CD8-positive, alpha-beta T cell (primary cell): ENCODE measurements at regions of chr12 and their contacts with region 1.

Region 1: DNA sequence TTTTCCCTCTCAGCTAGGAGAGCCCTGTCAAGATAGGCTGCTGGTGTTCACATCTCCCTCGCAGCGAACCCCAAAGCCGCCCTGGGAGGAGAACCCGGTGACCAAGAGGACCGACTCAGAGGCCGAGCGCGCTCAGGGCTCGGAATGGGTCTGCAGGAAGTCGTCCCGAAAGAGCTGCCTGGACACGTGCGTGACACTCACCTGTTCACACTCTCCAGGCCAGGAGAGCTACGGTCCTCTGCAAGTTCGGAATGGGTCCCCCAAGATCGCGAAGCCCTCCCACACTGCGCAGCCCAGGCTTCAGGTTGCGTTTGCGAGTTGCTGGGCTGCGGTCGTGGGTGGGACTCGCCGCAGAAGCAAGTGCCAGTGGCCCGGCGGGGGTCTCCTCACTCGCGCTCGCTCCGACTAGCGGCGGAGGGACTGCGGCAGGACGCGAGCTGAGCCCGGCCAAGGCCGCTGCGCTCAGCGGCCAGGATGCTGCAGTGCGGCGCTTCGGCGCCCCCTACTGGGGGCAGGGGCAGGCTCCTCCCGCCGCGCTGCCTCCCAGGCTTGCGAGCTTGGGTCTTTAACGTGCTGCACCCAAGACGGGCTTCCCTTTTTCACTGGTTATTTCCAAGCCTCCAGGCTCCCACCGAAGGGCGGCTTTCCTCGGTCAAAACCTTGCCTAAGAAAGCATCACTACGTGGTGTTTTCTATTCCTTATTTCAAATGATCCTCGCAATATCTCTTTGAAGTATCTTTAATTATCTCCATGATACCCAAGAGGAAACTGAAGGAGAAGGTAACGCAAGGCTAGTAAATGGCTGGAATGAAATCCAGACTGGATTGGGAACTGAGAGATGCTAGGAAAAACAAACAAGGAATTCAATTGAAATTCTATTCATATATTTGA is at the start of gene RERG:
- DNase-seq: peak; percentile 35 to 87 (median 67)
- ATAC-seq: peak; percentile 96
- H3K4me3 ChIP-seq: peak within 1 kb of the TSS; percentile 42 to 46
- H3K4me3 Mint-ChIP-seq: peak within 1 kb of the TSS; percentile 76
- H3K27ac ChIP-seq: no peak within 1 kb of the TSS
- H3K27ac Mint-ChIP-seq: no peak within 1 kb of the TSS
- H3K4me1 ChIP-seq: peaks cover 7% of the 10 kb centered on the region
- H3K4me1 Mint-ChIP-seq: peaks cover 15% of the 10 kb centered on the region
- H3K27me3 ChIP-seq: peaks cover 0 to 3% of the 10 kb centered on the region in 2 experiments
- H3K27me3 Mint-ChIP-seq: peaks cover 22% of the 10 kb centered on the region
- CTCF ChIP-seq: peak; percentile 84
- total RNA-seq, gene RERG: not detected

Region 2: GRCh38 chr12:14629832-14630710 is 591.2 kb before region 1 on chr12:
- CTCF ChIA-PET with region 1: interaction called, 3 read pairs
- POLR2A ChIA-PET with region 1: no interaction called
- intact Hi-C with region 1: loop called in 1 of 2 experiments (anchors 5 kb)
- DNase-seq: peak; percentile 32 to 77 (median 66)
- ATAC-seq: peak; percentile 100
- H3K4me3 ChIP-seq: no peak overlapping the region
- H3K4me3 Mint-ChIP-seq: no peak overlapping the region
- H3K27ac ChIP-seq: no peak overlapping the region
- H3K27ac Mint-ChIP-seq: no peak overlapping the region
- H3K4me1 ChIP-seq: no peaks in the 10 kb centered on the region
- H3K4me1 Mint-ChIP-seq: peaks cover 2% of the 10 kb centered on the region
- H3K27me3 ChIP-seq: no peaks in the 10 kb centered on the region
- H3K27me3 Mint-ChIP-seq: peaks cover 2% of the 10 kb centered on the region
- CTCF ChIP-seq: peak; percentile 99

Region 3: DNA sequence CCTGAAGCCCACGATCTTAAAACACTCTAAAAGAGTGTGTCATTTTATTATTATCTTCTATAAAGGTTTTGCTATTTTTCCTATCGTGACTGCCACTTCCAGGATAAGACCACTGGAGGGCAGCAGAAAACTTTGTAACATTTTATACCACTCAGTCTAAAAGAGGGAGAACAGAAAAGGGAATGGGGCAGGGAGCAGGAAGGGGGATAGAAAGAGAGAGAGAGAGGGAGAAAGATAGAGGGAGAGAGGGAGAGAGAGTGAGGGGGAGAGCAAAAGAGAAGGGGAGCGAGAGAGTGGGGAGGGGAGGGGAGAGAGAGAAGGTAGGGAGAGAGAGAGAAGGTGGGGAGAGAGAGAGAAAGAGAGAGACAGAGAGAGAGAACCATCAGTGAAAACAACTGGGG is 375.9 kb before region 1 on chr12:
- CTCF ChIA-PET with region 1: interaction called, 22 read pairs
- POLR2A ChIA-PET with region 1: no interaction called
- intact Hi-C with region 1: loop called (anchors 1 to 2 kb)
- DNase-seq: peak; percentile 7 to 73 (median 39)
- ATAC-seq: peak; percentile 71
- H3K4me3 ChIP-seq: no peak overlapping the region
- H3K4me3 Mint-ChIP-seq: no peak overlapping the region
- H3K27ac ChIP-seq: no peak overlapping the region
- H3K27ac Mint-ChIP-seq: no peak overlapping the region
- H3K4me1 ChIP-seq: peaks cover 9% of the 10 kb centered on the region
- H3K4me1 Mint-ChIP-seq: peaks cover 8% of the 10 kb centered on the region
- H3K27me3 ChIP-seq: no peaks in the 10 kb centered on the region
- H3K27me3 Mint-ChIP-seq: no peaks in the 10 kb centered on the region
- CTCF ChIP-seq: peak; percentile 88

Region 4: GRCh38 chr12:14995583-14996425 is 225.4 kb before region 1 on chr12:
- CTCF ChIA-PET with region 1: interaction called, 4 read pairs
- POLR2A ChIA-PET with region 1: no interaction called
- intact Hi-C with region 1: loop called in 1 of 2 experiments (anchors 2 kb)
- DNase-seq: peak in 2 of 9 experiments; percentile 78 to 85
- ATAC-seq: peak; percentile 70
- H3K4me3 ChIP-seq: no peak overlapping the region
- H3K4me3 Mint-ChIP-seq: peak overlapping the region; percentile 20
- H3K27ac ChIP-seq: no peak overlapping the region
- H3K27ac Mint-ChIP-seq: peak overlapping the region; percentile 63
- H3K4me1 ChIP-seq: peaks cover 29% of the 10 kb centered on the region
- H3K4me1 Mint-ChIP-seq: peaks cover 31% of the 10 kb centered on the region
- H3K27me3 ChIP-seq: no peaks in the 10 kb centered on the region
- H3K27me3 Mint-ChIP-seq: peaks cover 2% of the 10 kb centered on the region
- CTCF ChIP-seq: peak; percentile 75

Region 5: DNA sequence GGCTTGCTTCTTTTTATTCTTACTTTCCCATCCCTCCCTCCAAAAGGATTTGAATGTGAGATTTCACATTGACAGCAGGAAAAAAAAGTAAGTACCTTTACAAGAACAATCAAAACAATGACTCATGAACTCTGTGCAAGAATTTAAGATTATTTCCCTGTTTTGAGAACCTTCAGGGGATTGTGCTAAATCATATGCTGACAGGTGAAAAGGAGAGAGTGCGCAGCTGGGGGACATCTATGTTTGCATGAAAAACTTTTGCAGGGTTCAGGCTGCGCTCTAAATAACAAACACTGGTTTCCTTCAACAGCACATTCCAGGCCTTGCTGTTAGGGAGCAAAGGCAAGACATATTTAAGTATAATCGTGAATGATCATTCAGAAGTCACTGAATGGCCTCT is 27.3 kb before region 1 on chr12:
- CTCF ChIA-PET with region 1: interaction called, 11 read pairs
- POLR2A ChIA-PET with region 1: interaction called, 3 read pairs
- intact Hi-C with region 1: no loop called
- DNase-seq: no peak
- ATAC-seq: no peak
- H3K4me3 ChIP-seq: no peak overlapping the region
- H3K4me3 Mint-ChIP-seq: no peak overlapping the region
- H3K27ac ChIP-seq: no peak overlapping the region
- H3K27ac Mint-ChIP-seq: no peak overlapping the region
- H3K4me1 ChIP-seq: no peaks in the 10 kb centered on the region
- H3K4me1 Mint-ChIP-seq: no peaks in the 10 kb centered on the region
- H3K27me3 ChIP-seq: no peaks in the 10 kb centered on the region
- H3K27me3 Mint-ChIP-seq: peaks cover 6% of the 10 kb centered on the region
- CTCF ChIP-seq: no peak

Region 6: GRCh38 chr12:15240898-15241297 is 19.7 kb after region 1 on chr12:
- CTCF ChIA-PET with region 1: interaction called, 11 read pairs
- POLR2A ChIA-PET with region 1: no interaction called
- intact Hi-C with region 1: no loop called
- DNase-seq: no peak
- ATAC-seq: no peak
- H3K4me3 ChIP-seq: no peak overlapping the region
- H3K4me3 Mint-ChIP-seq: no peak overlapping the region
- H3K27ac ChIP-seq: no peak overlapping the region
- H3K27ac Mint-ChIP-seq: no peak overlapping the region
- H3K4me1 ChIP-seq: no peaks in the 10 kb centered on the region
- H3K4me1 Mint-ChIP-seq: no peaks in the 10 kb centered on the region
- H3K27me3 ChIP-seq: peaks cover 0 to 2% of the 10 kb centered on the region in 2 experiments
- H3K27me3 Mint-ChIP-seq: peaks cover 53% of the 10 kb centered on the region
- CTCF ChIP-seq: no peak